GM23248 (cell line): ENCODE measurements at regions of chr4 and their contacts with region 1.

Region 1: GRCh38 chr4:103915224-103915869 is 195.6 kb upstream of the TACR3 start:
- DNase-seq: peak; percentile 66
- H3K4me3 ChIP-seq: no peak overlapping the region
- H3K27ac ChIP-seq: no peak overlapping the region
- H3K4me1 ChIP-seq: no peaks in the 10 kb centered on the region
- H3K27me3 ChIP-seq: no peaks in the 10 kb centered on the region

Region 2: DNA sequence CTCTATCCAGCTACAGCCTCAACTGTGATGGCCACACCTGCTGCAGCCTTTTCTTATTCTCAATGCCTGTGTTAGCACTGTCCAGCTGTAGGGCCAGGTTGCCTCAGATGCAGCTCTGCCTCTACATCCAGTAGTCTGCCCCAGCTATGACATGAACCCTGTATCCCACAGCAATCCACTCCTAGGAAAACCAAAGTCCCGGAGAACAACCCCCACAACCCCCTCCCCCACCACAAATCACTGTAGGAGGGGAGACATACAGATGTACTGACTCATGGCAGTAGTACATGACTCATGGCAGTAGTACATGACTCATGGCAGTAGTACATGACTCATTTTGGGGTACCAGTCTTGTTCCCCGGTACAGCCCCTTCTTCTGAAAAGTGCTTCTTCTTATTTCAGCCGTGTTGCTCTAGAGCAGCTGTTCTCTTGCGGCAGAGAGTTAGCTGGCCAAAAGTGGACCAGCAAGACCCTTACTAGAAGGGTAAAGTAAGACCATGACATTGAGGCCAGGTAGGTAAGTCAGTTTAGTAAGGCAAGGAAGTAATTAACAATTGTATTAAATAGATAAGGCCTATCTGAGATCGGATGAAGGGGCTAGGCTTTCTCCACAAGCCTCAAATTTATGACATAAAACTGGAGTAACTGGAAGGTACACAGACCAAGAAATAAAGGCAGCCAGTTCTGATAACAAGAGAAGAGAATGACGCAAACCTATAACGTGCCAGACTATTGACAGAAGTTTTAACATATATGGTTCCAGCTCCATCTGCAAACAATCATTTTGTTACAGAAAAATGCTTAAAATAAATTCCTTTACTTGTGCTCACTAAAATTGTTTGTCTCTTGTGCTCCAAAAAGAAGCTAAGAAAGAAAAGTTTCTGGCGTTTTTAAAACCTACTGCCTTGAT is 416.9 kb before region 1 on chr4:
- in situ Hi-C with region 1: loop called (anchors 25 kb)
- DNase-seq: peak; percentile 74
- H3K4me3 ChIP-seq: peak overlapping the region; percentile 45
- H3K27ac ChIP-seq: peak overlapping the region; percentile 58
- H3K4me1 ChIP-seq: peaks cover 23% of the 10 kb centered on the region
- H3K27me3 ChIP-seq: no peaks in the 10 kb centered on the region